PC-9 (cell line): ENCODE measurements at regions of chr5 and their contacts with region 1.

Region 1: DNA sequence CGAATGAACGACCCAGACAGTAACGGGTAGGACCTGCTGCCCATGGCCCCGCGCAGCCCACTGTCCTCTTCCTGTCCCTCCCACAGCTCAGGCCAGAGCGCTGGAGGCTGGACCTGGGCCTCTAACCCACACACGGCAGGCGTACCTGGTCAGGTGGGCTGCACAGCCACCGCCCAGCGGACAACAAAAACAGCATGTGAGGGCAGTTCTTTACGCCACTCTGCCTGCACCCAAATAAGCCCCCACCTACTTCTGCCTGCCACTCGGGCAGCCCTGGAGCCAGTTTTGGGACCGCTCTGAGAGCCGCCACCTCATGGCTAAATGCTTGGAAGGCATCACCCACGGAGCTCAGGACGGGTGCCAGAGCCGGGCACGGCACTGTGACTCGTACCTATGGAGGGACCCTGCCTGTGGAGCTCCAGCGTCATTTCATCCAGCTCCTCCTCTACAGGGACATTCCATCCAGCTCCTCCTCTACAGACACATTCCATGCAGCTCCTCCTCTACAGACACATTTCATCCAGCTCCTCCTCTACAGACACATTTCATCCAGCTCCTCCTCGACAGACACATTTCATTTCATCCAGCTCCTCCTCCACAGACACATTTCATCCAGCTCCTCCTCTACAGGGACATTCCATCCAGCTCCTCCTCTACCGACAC is 18.9 kb downstream of the CLPTM1L start:
- DNase-seq: peak in 1 of 2 experiments; percentile 38
- H3K4me3 ChIP-seq: peak overlapping the region; percentile 7; the same call in 1 of the 2 replicates
- H3K27ac ChIP-seq: peak overlapping the region; percentile 86
- H3K4me1 ChIP-seq: peaks cover 38% of the 10 kb centered on the region
- H3K27me3 ChIP-seq: no peaks in the 10 kb centered on the region
- CTCF ChIP-seq: no peak

Region 2: DNA sequence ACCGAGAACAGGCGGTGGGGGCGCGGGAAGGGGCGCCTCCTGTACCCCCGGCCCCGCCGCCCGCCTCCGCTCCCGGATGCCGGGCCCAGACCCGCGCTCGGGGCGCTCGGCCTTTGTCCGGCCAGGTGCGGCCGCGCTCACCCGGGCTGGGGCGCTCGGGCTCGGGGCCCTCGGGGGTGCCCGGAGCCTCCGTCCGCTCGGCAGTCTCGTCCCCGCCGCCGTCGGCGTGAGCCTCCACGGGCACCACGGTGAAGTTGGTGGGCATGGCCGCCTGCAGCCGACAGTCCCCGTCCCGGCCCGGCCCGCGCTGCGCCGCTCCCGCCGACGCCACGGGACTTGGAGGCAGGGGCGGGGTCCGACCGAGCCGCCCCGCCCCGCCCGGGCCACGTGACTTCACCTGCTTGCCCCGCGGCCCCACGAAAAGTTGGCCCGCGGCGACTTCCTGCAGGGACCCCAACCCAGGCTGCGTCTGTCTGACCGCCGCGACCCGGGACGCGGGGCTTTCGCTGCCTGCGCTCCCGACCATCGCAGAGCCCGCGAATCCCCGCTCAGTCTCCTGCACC is 214.2 kb before region 1 on chr5 and contains the start of gene SLC12A7:
- CTCF ChIA-PET with region 1: no interaction called
- POLR2A ChIA-PET with region 1: interaction called, 15 read pairs
- intact Hi-C with region 1: loop called (anchors 2 kb)
- DNase-seq: peak; percentile 61 to 92
- H3K4me3 ChIP-seq: peak within 1 kb of the TSS; percentile 84
- H3K27ac ChIP-seq: peak within 1 kb of the TSS; percentile 62
- H3K4me1 ChIP-seq: peaks cover 32% of the 10 kb centered on the region
- H3K27me3 ChIP-seq: no peaks in the 10 kb centered on the region
- CTCF ChIP-seq: no peak
- total RNA-seq, gene SLC12A7: 174 and 207 TPM in 2 replicates

Region 3: GRCh38 chr5:1130218-1130946 is 195.6 kb before region 1 on chr5:
- CTCF ChIA-PET with region 1: no interaction called
- POLR2A ChIA-PET with region 1: interaction called, 10 read pairs
- intact Hi-C with region 1: no loop called
- DNase-seq: peak; percentile 97 to 99
- H3K4me3 ChIP-seq: peak overlapping the region; percentile 45; the same call in 1 of the 2 replicates
- H3K27ac ChIP-seq: peak overlapping the region; percentile 82
- H3K4me1 ChIP-seq: peaks cover 57% of the 10 kb centered on the region
- H3K27me3 ChIP-seq: no peaks in the 10 kb centered on the region
- CTCF ChIP-seq: peak; percentile 27; the same call in 1 of the 2 replicates

Region 4: GRCh38 chr5:1336106-1336561 is 10.1 kb after region 1 on chr5:
- CTCF ChIA-PET with region 1: no interaction called
- POLR2A ChIA-PET with region 1: interaction called, 25 read pairs
- intact Hi-C with region 1: no loop called
- DNase-seq: no peak
- H3K4me3 ChIP-seq: no peak overlapping the region
- H3K27ac ChIP-seq: no peak overlapping the region
- H3K4me1 ChIP-seq: no peaks in the 10 kb centered on the region
- H3K27me3 ChIP-seq: no peaks in the 10 kb centered on the region
- CTCF ChIP-seq: no peak

Region 5: GRCh38 chr5:1488943-1489680 is 163.1 kb after region 1 on chr5:
- CTCF ChIA-PET with region 1: no interaction called
- POLR2A ChIA-PET with region 1: no interaction called
- intact Hi-C with region 1: no loop called
- DNase-seq: no peak
- H3K4me3 ChIP-seq: no peak overlapping the region
- H3K27ac ChIP-seq: no peak overlapping the region
- H3K4me1 ChIP-seq: no peaks in the 10 kb centered on the region
- H3K27me3 ChIP-seq: no peaks in the 10 kb centered on the region
- CTCF ChIP-seq: no peak

Region 6: DNA sequence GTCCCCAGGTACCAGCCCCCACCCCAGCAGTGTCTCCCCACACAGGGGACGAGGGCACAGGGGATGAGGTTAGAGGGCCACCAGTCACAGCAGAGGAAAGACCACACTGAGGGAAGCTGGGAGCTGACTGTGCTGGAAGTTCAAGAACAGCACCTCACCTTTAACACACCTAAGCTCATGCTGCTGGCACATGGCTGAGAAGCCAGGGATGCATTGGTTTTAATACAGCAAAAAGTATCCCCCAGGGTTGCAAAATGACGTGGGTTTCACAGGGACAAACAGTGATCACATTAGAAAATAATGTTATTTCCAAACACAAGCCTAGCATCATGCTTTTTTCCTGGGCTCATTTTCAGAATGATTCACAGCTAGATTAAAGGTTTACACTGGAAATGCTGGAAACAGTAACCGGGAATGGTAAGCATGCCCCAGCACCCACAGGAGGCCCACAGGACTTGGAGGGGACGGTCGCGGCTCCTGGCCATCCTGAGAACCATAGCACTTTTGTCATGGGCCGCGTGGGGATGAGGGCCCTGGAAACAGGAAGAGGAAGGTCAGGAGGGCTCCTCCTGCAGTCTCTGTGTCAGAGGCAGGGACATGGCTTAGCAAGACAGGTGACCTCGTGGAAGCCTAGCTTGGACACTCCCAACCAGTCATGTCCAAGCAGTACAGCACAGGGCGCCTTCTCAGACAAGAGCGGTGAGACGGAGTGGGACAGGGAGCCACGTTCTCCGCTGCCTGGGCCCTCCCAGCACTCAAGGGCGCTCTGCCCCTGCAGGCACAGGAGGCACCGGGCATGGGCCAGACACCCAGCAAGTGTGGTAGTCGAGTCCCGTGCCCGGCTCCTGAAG is 191.0 kb after region 1 on chr5:
- CTCF ChIA-PET with region 1: no interaction called
- POLR2A ChIA-PET with region 1: interaction called, 15 read pairs
- intact Hi-C with region 1: no loop called
- DNase-seq: peak; percentile 38 to 86
- H3K4me3 ChIP-seq: peak overlapping the region; percentile 3; the same call in 1 of the 2 replicates
- H3K27ac ChIP-seq: peak overlapping the region; percentile 85
- H3K4me1 ChIP-seq: peaks cover 66% of the 10 kb centered on the region
- H3K27me3 ChIP-seq: no peaks in the 10 kb centered on the region
- CTCF ChIP-seq: no peak